ENCODE measurements at regions of chr20 and their contacts with region 1.

Region 1: GRCh38 chr20:49982346-49983122 is at the start of gene SNAI1:
- DNase-seq: peak; percentile 99
- CTCF ChIP-seq: peak; percentile 55

Region 2: GRCh38 chr20:48841847-48842529 is 1140.5 kb before region 1 on chr20:
- in situ Hi-C with region 1: no loop called
- DNase-seq: no peak
- CTCF ChIP-seq: no peak

Region 3: DNA sequence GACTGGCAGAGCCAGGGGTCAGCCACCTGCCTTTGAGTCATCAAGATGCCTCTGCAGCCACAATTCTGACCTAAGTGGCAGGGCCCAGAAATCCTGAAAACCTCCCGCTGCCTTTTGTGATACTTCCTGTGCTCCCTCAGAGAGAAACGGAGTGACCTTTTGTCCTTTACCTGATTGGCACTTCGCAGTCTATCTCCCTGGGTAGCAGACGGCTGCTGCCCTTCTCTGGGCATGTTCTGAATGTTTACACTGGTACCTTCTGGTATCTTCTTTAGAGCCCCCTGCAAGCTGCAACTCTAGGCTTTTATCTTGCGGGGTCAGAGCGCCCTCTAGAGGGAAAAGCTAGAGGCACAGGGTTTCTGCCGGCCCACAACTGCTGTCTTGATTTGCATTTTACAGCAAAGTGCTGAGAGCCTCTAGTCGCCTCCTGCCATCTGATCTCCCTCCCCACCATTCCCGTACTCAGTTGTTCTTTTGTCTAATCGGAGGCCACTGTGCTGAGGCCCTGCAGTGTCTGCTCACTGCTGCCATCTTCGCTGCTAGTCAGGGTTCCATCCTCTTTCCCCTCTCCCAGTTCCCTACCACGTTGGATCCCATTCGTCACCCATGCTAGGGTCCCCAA is 94.1 kb before region 1 on chr20:
- in situ Hi-C with region 1: no loop called
- DNase-seq: peak; percentile 88
- CTCF ChIP-seq: peak; percentile 74

Region 4: DNA sequence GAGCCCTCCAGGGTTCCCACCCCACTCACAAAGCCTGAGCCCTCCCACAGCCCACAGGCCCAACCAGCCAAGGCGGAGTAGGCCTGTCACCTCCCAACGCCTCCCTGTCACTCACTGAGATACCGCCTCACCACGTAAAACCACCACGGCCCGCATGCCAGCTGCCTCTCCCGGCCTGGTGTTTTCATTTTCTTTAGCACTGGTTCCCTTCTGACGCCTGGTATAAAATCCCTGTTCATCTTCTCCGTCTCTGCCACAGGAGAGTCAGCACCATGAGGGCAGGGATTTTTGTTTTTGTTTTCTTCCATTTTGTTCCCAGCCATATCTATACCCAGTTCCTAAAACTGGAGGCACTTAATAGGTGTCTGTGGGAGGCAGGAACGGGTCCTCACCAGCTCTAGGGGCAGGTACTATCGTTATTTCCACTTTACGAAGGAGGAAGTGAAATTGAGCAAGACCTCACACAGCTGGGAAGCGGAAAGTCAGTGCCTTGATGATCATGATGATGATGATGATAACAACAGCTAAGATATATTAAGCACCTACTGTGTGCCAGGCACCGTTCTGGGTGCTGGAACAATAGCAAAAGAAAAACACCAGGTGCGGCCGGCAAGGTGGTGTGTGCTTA is 58.8 kb after region 1 on chr20:
- in situ Hi-C with region 1: no loop called
- DNase-seq: peak; percentile 57
- CTCF ChIP-seq: no peak

Region 5: DNA sequence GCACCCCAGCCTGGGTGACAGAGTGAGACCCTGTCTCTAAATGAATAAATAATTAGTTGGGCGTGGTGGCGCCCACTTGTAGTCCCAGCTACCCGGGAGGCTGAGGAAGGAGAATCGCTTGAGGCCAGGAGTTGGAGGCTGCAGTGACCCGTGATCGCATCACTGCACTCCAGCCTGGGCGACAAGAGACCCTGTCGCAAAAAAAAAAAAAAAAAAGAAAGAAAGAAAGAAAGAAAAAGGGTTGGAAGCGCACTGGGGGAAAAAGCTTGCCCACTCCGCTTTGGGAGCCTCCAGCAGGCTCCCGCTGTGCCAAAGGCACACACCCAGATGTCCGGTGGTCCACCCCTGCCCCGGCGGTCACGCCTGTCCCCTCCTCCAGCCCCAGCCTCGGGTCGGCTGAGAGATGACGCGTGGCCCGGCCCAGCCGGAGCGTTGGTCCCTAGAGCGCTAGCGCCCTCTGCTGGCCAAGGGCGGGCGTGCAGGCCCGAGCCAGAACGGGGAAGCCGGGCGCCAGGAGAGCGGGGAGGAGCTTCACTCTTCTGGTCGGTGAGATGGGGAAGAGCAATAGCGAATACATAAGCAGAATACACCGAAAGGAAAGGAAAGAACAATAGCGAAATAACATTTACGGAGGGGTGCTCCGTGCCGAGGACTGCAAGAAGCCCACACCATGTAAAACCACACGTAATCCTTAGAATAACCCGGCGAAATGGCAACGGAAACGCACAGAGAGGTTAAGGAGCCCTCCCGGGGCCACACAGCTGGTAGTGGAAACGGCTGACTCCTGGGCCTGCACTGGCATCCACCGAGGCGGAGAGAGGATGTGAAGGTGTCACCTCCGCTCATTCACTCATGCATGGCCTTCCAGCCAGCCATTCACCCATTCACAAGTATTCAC is 88.7 kb after region 1 on chr20:
- in situ Hi-C with region 1: loop called (anchors 10 kb)
- DNase-seq: peak; percentile 95
- CTCF ChIP-seq: peak; percentile 99

Region 6: DNA sequence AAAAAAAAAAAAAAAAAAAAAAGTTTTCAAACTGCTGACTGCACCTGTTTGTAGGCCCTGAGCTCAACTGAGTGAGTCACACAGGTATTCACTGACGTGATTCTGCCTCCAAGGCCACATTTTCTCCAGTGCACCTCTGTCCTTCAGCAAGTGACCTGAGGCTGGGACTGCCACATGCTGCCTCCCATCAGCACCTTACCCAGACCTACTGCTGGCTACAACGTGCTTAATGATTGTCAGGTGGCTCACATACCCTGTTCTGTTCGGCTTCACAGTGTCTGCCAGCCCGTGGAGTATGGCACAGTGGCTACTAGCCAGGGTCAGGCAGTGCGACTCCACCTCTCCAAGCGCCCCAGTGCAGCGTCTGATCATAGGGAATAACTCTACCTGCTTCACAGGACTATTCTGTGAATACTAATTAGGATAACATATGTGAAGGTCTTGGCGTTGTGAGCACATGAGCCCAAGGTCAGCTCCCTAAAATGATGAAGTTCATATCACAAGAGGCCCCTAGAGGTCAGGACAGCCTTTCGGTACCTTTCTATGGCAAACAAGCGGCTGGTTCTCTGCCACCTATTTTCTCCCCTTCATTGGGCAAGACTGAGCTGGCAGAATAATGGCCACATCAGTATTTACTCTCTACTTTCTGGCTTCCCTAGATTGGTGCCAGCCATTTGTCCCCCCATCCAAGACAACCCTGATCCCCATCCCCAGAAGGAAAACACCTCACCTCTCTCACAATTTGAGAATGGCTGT is 680.7 kb after region 1 on chr20:
- in situ Hi-C with region 1: no loop called
- DNase-seq: no peak
- CTCF ChIP-seq: peak; percentile 30